Prostate gland (tissue), 2 donors: ENCODE measurements at regions of chr3 and their contacts with region 1.

Region 1: DNA sequence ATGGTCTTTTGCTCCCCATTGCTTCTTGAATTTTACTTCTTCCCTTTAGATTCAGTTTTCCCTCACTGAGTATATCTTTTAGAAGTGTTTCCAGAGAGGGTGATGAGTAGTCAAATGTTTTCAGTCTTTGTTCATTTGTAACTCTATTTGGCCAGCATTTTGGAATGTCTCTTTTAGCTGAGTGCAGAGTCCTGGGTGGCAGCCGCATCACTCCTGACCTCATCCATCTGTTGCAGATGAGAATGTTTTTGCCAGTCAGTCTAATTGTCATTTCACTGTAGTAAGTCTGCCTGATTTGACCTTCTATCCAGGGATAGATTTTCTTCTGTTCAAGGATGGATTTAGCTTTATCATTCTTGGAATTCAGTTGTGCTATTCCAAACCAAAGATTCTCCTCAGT is 7.3 kb downstream of the SRPRB start:
- DNase-seq: no peak
- H3K4me3 ChIP-seq: no peak overlapping the region
- H3K27ac ChIP-seq: no peak overlapping the region
- H3K4me1 ChIP-seq: no peaks in the 10 kb centered on the region
- H3K27me3 ChIP-seq: no peaks in the 10 kb centered on the region
- CTCF ChIP-seq: no peak
- POLR2A ChIP-seq: no peak

Region 2: DNA sequence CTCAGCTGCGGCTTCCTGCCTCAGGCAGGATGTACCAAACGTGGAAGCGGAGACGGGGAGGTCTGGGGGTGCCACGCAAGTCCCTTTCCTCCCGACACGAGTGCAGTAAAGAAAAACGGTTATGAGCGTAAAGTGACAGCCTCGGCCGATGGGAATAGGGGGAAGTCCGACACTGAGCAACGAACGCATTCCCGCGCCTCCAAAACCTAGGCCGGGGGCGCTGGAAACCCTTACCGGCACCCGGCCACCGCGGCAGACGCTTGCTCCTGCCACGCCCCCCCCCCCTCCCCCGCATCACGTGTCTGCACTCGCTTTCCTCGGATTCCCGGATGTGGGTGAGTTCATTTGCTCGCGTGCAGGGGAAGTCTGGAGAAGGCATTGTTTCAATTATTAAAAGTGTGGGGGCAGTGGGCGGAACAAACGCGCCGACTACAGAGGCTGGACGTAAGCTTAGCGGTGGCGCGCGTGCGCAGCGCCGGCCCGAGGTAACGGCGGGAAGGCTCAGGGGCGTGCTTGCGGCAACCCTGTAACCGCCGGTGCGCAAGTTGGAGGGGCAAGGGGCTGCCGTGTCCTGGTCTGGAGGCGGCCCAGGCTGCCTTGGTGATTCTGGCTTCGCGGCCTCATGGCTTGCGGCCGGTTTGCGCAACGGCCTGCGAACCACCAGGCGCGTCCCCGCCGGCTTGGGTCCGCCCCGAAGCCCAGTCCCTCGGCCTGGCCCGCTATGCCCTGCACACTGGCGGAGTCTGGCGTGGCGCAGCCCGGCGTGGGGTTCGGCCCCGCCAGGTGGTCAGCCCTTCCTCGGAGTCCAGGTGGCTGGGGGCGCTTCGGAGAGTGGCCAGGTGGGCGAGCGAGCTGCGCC is 673.1 kb after region 1 on chr3 and contains the starts of genes ANAPC13 and CEP63:
- intact Hi-C with region 1: loop called (anchors 10 kb)
- DNase-seq: peak; percentile 95
- H3K4me3 ChIP-seq: peak within 1 kb of the TSS; percentile 59 to 89
- H3K27ac ChIP-seq: peak within 1 kb of the TSS; percentile 86 to 96
- H3K4me1 ChIP-seq: peaks cover 9% of the 10 kb centered on the region
- H3K27me3 ChIP-seq: no peaks in the 10 kb centered on the region
- CTCF ChIP-seq: peak in 2 of 4 experiments; percentile 13 to 25
- POLR2A ChIP-seq: no peak
- total RNA-seq, gene ANAPC13: 40.2 to 83.2 TPM
- total RNA-seq, gene CEP63: 35.2 to 60.1 TPM